Right ventricle myocardium inferior (tissue), 1 donor: ENCODE measurements at regions of chr17 and their contacts with region 1.

Region 1: DNA sequence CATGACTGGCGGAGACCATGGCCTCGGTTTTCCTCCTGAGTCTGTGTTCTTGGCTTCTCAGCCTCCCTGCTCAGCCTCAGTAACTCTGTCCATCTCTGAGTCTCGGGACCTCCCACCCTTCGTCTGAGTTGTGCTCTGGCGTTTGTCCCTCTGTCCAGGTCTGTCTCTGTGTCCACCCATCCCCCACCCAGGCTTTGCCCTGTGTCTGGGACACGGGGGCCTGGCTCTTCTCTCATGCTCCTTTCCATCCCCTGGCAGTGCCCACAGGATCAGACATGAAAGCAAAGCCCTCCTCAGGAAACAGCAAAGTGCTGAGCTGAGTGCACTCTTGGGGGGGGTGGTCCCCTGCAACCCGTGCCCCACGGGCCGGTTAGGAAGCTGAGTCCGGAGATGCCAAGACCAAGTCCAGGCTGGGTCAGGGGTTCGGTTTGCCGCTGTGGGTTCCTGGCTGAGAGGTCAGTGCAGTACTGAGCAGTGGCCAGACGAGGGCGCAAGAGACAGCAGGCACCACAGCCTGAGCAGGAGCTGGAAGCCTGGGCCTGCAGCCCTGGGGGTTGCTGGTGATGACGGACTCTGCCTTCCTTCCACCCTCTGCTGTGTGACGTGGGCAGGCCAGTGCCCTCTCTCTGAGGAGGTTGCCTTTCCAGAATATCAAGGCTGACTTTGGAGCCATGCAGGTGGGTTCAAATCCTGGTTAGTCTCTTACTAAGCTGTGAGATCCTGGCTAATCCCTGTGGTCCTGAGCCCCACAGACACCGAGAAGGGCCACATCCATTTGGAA is 2.5 kb downstream of the P2RX1 start:
- DNase-seq: peak; percentile 92
- ATAC-seq: peak; percentile 72

Region 2: DNA sequence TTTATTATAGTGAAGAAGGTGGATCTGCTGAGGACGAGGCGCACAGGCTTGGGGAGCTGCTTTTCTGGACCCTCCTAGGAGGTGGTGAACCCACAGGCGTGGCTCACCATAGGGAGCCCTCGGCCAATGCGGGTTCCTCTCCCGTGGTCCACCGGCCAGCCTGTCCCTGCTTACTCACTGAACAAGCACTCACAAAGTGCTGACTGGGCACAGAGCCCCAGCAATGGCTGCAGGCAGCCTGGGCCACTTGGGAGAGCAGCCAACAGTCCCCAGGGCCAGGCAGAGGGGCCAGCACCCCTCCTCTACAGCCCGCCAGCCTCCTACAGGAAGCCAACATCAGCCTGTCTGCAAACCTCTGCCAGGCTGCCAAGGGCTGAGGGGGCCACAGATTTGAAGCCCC is 48.5 kb before region 1 on chr17:
- intact Hi-C with region 1: loop called (anchors 5 kb)
- DNase-seq: no peak
- ATAC-seq: peak; percentile 42

Region 3: GRCh38 chr17:4004517-4005295 is 91.0 kb after region 1 on chr17:
- intact Hi-C with region 1: loop called (anchors 5 kb)
- DNase-seq: peak; percentile 83
- ATAC-seq: peak; percentile 55

Region 4: DNA sequence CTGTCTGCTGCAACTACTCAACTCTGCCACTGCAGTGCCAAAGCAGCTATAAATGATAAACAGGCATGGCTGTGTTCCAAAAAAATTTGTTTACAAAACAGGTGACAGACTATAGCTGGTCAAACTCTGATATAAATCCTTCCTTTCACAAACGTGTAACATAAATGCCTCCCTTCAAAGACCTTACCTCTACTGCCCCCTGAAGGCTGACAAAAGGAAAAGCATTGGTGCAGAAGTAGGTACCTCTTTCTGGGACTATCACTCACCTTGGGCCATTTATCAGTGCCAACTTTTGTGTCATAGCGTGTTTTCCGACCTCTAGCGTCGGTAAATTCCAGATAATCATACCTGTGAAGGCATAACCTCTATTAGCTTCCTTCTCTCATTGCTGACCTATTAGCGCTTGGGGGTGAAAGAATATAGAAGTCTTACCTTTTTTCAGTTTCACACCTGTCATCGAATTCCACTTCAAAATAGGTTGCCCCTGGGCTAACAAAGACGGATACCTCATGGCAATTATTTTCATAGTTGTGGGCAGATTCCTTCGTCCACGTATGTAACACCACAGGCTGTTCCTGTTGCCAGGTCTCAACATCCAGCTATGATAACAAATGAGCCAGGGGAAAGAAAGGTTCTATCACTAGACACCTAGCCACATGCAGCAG is 161.2 kb after region 1 on chr17:
- intact Hi-C with region 1: loop called (anchors 5 kb)
- DNase-seq: no peak
- ATAC-seq: peak; percentile 31